A549 (cell line): ENCODE measurements at regions of chr3 and their contacts with region 1.

Region 1: DNA sequence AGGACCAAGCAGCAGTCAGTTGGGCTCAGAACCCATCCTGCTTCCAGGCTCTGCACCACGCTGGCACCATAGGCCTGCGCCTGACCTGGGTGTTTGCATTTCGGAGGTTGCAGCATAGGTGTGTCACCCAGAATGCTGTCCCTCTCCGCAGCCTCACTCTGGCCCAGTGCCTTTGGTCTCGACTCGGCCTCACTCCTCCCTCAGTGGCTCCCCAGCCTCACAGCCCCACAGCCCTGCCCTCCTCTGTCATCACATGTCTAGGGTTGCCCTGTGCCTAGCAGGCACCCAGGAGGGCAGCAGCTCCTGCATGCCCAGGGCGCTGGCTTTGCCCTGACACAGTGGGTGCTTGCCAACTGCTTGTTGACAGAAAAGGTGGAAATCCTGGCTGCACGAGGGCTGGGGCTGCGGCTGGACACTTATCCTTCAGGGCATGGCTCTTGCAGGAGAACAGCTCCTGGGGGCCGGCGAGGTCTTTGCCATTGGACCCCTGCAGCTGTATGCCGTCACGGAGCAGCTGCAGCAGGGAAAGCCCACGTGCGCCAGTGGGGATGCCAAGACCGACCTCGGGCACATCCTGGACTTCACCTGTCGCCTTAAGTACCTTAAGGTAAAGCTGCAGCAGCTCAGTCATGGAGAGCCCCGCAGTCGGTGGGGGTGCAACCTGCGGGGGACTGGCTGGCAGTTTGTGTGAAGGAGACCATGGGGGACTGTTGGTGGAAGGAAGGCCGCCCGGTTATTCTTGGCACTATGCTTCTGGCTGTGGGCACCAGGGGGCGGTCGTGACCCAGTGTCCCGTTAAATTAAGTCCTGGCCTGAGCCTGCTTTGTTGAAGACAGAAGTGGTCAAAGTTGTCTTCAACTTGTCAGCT is 16.2 kb downstream of the NISCH start:
- DNase-seq: peak; percentile 46 to 57
- ATAC-seq: peak; percentile 93 to 97
- H3K4me3 ChIP-seq: no peak overlapping the region
- H3K27ac ChIP-seq: no peak overlapping the region
- H3K4me1 ChIP-seq: no peaks in the 10 kb centered on the region
- CTCF ChIP-seq: peak; percentile 49
- EP300 ChIP-seq: no peak
- POLR2A ChIP-seq: no peak
- RAD21 ChIP-seq: peak; percentile 57 to 74

Region 2: DNA sequence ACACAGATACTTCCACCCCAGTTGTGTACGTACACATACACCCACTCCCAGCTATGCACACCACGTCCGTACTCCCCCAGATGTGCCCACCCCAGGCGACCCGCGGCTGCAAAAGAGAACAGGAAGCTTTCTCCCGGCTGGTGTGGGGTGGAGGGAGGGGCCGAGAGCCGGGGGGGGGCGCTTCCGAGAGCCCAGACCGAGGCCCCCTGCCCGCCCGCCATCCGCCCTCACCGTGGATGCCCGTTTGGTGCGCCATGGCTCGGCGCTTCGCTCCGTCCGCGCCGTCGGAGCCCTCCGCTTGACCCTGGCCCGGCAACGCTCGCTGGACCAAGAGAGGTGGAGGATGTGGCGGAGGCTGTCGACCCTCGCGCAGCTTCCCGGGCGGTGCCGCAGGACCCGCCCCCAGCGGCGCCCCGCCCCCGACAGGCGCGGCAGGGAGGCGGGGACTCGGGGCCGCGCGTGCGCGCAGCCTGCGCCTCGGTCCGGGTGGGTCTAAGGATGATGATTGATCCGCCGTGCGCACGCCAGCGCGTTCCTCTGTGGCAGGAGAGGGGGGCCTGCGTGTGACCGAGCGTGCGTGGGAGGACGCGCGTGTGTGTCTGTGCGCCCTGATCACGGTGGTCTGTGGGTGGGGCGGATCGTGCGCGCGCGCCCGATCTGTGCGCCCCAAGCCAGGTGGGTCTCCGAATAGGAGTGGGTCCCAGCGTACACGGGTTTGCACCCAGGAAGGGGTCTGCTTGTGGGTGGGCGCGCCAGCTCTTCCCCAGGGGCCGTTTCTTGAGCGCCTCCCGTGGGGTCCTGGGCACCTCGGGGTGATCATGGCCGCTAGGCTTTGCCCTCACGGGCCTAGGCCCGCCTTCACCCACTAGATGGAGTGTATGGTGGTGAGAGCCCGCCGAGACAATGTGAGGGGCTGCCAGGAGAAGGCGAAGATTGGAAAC is 232.6 kb before region 1 on chr3 and contains the start of gene TWF2:
- CTCF ChIA-PET with region 1: no interaction called
- POLR2A ChIA-PET with region 1: no interaction called
- DNase-seq: peak; percentile 59 to 80
- ATAC-seq: peak; percentile 70 to 83
- H3K4me3 ChIP-seq: peak within 1 kb of the TSS; percentile 96
- H3K27ac ChIP-seq: peak within 1 kb of the TSS; percentile 98
- H3K4me1 ChIP-seq: peaks cover 32% of the 10 kb centered on the region
- CTCF ChIP-seq: 0 out of 3 replicates have a peak, but pooled peaks have one; percentile 15
- EP300 ChIP-seq: no peak
- POLR2A ChIP-seq: peak; percentile 81
- RAD21 ChIP-seq: no peak
- polyA plus RNA-seq, gene TWF2: 36.8 and 46.3 TPM in 2 replicates

Region 3: DNA sequence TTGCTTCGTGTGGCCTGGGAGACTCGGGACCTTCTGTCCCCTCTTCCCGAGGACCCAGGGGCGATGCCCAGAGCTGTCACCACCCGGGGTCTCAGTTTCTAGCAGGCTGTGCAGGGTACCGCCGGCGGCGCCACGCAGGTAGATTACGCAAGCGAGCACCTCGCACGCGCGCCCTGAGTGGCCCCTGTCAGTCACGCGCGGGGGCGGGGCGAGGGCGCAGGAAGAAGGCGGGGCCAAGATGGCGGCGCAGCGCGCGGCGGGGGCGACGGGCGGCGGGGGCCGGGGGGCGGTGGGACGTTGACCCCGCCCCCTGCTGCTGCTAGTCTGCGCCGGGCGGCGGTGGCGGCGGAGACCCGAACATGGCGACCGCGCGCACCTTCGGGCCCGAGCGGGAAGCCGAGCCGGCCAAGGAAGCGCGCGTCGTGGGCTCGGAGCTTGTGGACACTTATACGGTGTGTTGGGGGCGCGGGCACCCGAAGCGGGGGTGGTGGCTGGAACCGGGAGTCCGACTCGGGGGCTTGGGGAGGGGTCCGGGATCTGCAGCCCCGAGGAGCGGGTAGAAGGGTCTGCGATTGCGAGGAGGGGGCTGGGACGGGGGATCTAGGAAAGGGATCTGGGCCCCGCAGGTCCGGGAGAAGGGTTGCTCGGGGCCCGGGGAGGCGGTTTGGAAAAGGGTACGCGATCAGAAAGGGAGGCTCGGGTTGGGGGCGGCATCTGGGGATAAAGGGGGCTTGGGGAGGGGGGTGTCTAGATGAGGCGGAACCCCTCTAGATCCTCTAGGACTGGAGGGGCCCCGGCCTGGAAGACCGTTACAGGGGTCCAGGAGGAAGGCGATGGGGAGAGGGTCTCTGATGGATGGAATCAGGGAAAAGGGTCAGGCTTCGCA is 16.1 kb before region 1 on chr3 and contains the start of gene NISCH:
- CTCF ChIA-PET with region 1: interaction called, 29 read pairs
- POLR2A ChIA-PET with region 1: no interaction called
- DNase-seq: peak; percentile 60 to 68
- ATAC-seq: peak; percentile 57 to 77
- H3K4me3 ChIP-seq: peak within 1 kb of the TSS; percentile 66
- H3K27ac ChIP-seq: peak within 1 kb of the TSS; percentile 84 to 99
- H3K4me1 ChIP-seq: peaks cover 16% of the 10 kb centered on the region
- CTCF ChIP-seq: no peak
- EP300 ChIP-seq: no peak
- POLR2A ChIP-seq: peak; percentile 75
- RAD21 ChIP-seq: no peak
- polyA plus RNA-seq, gene NISCH: 17.3 and 19.2 TPM in 2 replicates

Region 4: DNA sequence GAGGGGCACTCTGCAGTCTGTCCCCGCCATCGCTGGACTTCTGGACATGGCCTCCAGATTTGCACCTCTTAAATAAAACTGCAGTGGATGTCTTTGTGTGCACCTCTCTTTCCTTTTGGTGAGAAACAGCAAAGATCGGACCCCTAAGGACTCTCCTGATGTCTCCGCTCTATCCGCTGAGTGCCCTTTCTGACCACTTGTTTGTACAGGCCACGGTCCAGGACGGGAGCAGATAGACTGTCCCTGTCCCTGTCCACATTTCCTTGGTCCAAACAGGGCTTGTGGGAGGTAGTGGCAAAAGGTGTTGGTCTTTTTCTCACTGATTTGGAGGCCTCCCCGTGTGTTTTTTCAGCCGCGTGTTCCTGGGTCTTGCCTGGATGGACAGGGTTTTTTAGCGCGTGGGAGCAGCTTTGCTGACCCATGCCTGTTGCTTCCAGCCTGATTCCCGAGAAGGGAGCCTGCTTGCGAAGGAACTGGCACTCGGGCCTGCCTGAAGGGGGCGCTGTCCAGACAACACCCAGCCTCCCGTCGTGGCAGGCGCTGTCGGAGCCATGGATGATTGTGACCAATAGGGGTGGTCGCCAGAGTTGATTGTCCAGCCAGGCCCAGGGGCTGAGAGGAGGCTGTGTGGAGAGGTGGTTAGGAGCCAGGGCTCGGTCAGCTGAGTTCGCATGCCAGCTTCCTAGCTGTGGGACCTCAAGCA is 10.4 kb after region 1 on chr3:
- CTCF ChIA-PET with region 1: interaction called, 23 read pairs
- POLR2A ChIA-PET with region 1: no interaction called
- DNase-seq: peak; percentile 12 to 38
- ATAC-seq: peak in 1 of 2 experiments; percentile 43; a peak in 3 of 6 replicates
- H3K4me3 ChIP-seq: no peak overlapping the region
- H3K27ac ChIP-seq: no peak overlapping the region
- H3K4me1 ChIP-seq: no peaks in the 10 kb centered on the region
- CTCF ChIP-seq: no peak
- EP300 ChIP-seq: no peak
- POLR2A ChIP-seq: no peak
- RAD21 ChIP-seq: no peak

Region 5: DNA sequence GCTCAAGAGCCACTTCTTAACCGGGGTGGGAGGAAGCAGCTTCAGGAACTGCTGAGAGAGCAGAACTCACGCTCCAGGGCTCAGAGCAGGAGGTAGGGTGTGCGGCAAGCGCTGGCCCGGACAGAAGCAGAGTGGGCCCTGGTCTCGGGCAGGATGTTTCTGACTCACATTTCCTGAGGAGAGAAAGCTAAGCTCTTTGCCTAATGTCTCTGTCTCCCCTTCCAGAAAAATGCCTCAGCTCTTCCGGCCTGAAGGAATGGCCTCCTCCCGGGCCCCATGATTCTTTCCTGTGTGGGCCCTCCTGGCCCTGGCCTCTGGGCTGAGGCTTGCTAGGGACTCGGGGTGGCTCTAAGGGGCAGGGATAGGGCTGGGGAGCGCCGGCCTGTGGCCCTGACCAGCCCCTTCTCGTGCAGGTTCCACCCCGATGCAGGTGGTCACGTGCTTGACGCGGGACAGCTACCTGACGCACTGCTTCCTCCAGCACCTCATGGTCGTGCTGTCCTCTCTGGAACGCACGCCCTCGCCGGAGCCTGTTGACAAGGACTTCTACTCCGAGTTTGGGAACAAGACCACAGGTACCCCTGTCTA is 19.4 kb after region 1 on chr3:
- CTCF ChIA-PET with region 1: interaction called, 15 read pairs
- POLR2A ChIA-PET with region 1: no interaction called
- DNase-seq: no peak
- ATAC-seq: no peak
- H3K4me3 ChIP-seq: no peak overlapping the region
- H3K27ac ChIP-seq: no peak overlapping the region
- H3K4me1 ChIP-seq: no peaks in the 10 kb centered on the region
- CTCF ChIP-seq: no peak
- EP300 ChIP-seq: no peak
- POLR2A ChIP-seq: no peak
- RAD21 ChIP-seq: no peak

Region 6: DNA sequence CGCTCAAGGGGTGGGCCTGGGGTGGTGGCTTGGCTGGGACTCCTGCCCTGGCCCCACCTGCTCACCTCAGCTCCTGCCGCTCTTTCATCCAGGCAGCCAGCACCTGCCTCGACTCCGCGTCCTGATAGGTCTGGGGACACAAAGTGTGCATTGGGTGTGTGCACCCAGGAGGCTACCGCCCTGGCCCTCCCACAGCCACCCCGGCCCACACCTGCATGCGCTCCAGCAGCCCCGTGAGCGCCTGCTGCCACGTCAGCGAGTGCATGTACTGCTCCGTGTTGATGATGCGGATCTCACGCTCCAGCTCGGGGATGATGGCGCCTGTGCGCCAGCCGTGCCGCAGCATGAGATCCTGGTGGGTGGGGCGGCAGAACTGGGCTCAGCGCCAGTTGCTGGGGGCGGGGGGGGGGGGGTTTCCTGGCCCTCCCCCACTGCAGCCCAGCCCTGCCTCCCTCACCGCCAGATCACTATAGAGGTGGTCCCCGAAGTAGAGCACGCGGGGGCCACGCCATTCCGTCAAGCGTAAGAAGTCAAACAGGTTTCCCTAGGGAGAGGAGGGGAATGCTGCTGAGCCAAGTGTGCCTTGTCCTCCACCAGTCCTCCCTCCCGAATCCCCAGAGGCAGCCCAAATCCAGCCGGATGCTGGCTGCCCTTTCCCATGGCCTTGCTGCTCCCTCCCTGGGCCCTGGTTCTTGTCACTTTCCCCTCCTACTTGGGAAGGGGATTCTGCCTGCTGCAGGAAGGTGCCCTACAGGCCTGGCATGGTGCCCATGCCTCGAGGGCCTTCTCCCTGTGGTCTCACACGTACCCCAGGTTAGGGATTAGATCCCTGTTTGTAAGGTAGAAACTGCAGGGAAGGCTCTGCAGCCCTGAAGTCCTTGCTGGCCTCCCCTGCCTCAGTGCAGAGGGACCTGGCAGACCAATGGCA is 53.4 kb after region 1 on chr3:
- CTCF ChIA-PET with region 1: interaction called, 11 read pairs
- POLR2A ChIA-PET with region 1: no interaction called
- DNase-seq: no peak
- ATAC-seq: no peak
- H3K4me3 ChIP-seq: no peak overlapping the region
- H3K27ac ChIP-seq: no peak overlapping the region
- H3K4me1 ChIP-seq: no peaks in the 10 kb centered on the region
- CTCF ChIP-seq: no peak
- EP300 ChIP-seq: no peak
- POLR2A ChIP-seq: no peak
- RAD21 ChIP-seq: no peak